ENCODE measurements at regions of chr1 and their contacts with region 1.

Region 1: DNA sequence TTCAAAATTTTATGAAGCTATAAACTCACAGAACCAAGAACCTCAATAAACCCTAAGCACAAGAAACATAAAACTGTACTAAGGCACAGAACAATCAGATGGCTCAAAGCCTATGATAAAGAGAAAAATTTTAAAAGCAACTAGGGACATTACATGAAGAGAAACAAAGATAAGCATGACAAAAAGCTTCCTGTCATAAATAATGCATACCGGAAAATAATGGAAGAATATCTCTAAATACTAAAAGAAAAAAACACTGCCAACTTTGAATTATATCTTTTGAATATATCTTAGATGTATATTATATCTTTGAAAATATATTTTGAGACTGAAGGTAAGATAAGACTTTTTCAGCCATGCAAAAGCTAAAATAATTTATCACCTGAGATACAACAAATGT is 21.4 kb upstream of the KCNN3 start:
- H3K4me3 ChIP-seq: no peak overlapping the region
- H3K27ac ChIP-seq: no peak overlapping the region
- H3K4me1 ChIP-seq: no peaks in the 10 kb centered on the region
- CTCF ChIP-seq: no peak

Region 2: GRCh38 chr1:154863315-154864174 is 27.9 kb before region 1 on chr1:
- CTCF ChIA-PET with region 1: no interaction called
- POLR2A ChIA-PET with region 1: no interaction called
- H3K4me3 ChIP-seq: no peak overlapping the region
- H3K27ac ChIP-seq: no peak overlapping the region
- H3K4me1 ChIP-seq: no peaks in the 10 kb centered on the region
- CTCF ChIP-seq: peak; percentile 41

Region 3: DNA sequence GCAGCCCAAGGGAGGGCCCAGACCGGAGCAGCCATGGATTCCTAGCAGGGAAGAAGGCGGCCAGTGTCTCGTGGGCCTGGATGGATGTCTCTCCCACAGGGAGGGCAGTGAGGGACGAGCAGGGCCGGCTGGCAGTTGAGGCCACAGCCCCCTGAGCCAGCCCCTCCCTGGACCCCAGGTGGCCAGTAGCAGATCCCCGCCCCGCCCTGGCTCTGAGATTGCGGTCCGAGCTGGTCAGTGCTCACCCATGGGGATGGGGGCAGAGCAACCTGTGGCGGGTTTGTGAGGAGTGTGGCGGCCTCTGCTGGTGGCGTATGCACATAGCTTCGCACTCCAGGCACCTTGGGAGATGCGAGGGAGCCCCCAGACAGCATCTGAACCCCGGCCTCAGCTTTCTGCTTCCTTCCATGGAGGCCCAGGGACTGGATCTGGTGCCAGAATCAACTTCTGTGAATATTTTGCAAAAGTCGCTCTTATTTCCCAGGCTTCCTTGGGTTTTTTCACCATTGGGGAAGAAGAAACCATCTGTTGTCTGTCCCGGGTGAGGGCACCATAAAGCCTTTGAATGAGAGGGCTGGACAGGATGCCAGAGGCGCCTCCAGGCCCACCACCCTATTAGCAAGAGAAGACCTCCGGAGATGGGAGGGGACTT is 13.0 kb before region 1 on chr1:
- CTCF ChIA-PET with region 1: interaction called, 14 read pairs
- POLR2A ChIA-PET with region 1: no interaction called
- H3K4me3 ChIP-seq: no peak overlapping the region
- H3K27ac ChIP-seq: no peak overlapping the region
- H3K4me1 ChIP-seq: no peaks in the 10 kb centered on the region
- CTCF ChIP-seq: peak; percentile 86